ENCODE measurements at regions of chr1 and their contacts with region 1.

Region 1: DNA sequence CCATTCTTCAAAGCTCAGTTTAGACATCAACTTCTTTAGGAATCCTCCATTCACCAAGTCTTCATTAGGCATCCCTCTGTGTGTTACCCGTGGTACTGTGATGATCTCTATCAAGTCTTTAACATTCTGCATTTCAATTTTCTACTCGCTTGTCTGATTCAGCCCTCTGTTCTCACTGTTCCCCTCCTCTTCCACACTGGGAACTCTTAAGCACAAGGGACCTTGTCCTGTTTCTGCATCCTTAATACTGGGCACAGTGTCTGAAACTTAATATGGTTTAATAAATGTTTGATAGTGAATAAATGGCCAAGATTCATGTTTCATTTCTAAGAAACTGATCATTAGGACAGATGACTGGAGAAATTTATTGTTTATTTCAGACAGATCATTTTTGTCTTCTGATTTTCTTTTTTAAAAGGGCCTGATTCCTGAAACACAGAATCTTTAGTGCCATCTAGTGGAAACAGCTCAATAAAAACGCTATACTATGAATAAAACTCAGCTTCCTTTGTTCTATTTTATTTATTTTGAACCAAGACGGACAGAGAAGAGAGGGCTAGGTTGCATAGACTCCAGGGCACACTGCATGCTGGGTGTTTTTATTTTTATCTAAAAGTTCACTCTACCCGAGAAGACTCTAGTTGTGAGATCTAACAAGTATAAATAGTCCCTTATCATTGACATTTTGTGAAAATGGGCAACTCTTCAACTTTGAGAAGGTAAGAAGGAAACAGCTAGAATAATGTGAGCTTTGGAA is 7.0 kb upstream of the TRIM45 start:
- DNase-seq: peak in 1 of 2 donors; percentile 69
- H3K4me3 ChIP-seq: no peak overlapping the region
- H3K27ac ChIP-seq: peak overlapping the region in 1 of 5 donors; percentile 41
- H3K4me1 ChIP-seq: peaks cover 0 to 12% (median 11%) of the 10 kb centered on the region in 4 donors
- H3K27me3 ChIP-seq: no peaks in the 10 kb centered on the region
- CTCF ChIP-seq: peak in 4 of 7 experiments; percentile 15 to 53 (median 44)
- EP300 ChIP-seq: no peak
- POLR2A ChIP-seq: no peak

Region 2: DNA sequence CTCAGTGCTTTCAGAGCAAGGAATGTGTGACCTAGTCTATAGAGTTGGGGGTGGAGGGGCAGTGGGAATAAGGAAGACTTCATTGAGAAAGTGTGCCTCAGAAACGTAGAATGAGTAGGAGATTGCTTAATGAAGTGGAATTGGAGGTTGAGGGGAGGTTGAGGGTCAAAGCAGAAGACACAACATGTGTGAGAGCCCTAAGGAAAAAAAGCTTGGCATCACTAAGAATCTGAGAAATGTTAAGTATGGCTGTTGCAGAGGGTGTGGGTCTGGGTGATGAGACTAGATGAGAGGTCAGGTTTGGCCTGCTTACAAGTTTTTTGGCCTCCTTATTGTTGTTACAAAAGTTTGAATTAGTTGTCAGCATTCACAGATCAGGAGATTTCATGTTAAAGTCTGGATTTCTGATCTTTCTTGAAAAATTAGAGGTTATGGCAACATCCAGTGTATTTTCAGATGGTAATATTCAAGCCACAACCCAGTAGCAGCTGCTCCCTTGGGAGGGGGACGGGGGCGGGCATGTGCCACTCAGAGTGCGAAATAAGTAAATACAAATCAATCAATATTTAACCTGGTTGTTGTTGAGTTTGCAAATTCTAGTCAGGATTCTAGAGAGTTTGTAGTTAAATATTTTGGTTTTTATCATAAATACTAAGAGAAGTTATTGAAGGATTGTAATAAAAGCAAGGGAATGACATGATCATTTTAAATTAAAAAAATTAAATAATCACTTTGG is 243.1 kb after region 1 on chr1:
- intact Hi-C with region 1: loop called (anchors 5 kb)
- DNase-seq: no peak
- H3K4me3 ChIP-seq: no peak overlapping the region
- H3K27ac ChIP-seq: no peak overlapping the region
- H3K4me1 ChIP-seq: peaks cover 15 to 75% (median 38%) of the 10 kb centered on the region in 4 donors
- H3K27me3 ChIP-seq: no peaks in the 10 kb centered on the region
- CTCF ChIP-seq: no peak
- EP300 ChIP-seq: no peak
- POLR2A ChIP-seq: no peak